Gastrocnemius medialis (tissue), 4 donors: ENCODE measurements at regions of chr3 and their contacts with region 1.

Region 1: GRCh38 chr3:12135029-12135657 is 23.6 kb downstream of the TIMP4 start:
- DNase-seq: peak; percentile 49 to 62
- ATAC-seq: peak; percentile 68 to 72
- H3K4me3 ChIP-seq: no peak overlapping the region
- H3K27ac ChIP-seq: peak overlapping the region in 3 of 4 donors; percentile 5 to 92 (median 11)
- H3K4me1 ChIP-seq: peaks cover 12 to 19% of the 10 kb centered on the region in 2 donors
- H3K27me3 ChIP-seq: no peaks in the 10 kb centered on the region
- CTCF ChIP-seq: peak; percentile 84 to 92 (median 88)
- POLR2A ChIP-seq: no peak

Region 2: DNA sequence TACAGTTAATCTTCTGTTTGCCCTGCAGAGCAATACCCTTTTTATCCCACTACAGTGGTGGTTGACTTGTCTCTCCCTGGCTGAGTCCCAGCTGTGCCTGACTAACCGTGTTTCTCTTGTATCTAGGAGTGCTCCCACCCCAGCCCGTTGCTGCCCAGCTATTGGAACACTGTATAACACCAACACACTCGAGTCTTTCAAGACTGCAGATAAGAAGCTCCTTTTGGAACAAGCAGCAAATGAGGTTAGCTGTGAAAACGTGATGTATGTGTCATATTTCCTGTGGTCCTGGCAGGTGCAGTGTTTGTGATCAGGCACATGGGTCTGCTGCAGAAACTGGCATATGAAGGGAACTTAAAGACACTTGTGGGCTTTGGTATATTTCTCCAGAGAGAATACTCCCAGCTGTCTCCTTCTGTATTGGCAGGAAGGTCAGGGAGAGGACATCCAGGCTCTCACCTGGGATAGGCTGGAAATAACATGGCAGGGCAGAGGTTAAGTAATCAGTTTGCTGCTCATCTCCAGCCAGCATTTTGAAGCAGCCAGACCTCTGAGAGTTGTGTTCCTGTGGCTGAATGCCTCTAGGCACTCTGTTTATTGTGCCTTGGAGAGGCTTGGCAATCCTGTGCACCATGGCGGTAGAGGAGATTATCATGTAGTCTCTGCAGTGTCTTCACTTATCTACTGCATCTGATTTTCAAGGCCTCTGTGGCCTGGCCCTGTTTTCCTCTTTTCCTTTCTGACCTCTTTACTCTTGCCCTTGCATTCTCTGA is 828.1 kb before region 1 on chr3:
- in situ Hi-C with region 1: no loop called
- intact Hi-C with region 1: no loop called
- DNase-seq: no peak
- ATAC-seq: no peak
- H3K4me3 ChIP-seq: no peak overlapping the region
- H3K27ac ChIP-seq: no peak overlapping the region
- H3K4me1 ChIP-seq: peaks cover 5 to 8% of the 10 kb centered on the region in 2 donors
- H3K27me3 ChIP-seq: no peaks in the 10 kb centered on the region
- CTCF ChIP-seq: no peak
- POLR2A ChIP-seq: no peak

Region 3: DNA sequence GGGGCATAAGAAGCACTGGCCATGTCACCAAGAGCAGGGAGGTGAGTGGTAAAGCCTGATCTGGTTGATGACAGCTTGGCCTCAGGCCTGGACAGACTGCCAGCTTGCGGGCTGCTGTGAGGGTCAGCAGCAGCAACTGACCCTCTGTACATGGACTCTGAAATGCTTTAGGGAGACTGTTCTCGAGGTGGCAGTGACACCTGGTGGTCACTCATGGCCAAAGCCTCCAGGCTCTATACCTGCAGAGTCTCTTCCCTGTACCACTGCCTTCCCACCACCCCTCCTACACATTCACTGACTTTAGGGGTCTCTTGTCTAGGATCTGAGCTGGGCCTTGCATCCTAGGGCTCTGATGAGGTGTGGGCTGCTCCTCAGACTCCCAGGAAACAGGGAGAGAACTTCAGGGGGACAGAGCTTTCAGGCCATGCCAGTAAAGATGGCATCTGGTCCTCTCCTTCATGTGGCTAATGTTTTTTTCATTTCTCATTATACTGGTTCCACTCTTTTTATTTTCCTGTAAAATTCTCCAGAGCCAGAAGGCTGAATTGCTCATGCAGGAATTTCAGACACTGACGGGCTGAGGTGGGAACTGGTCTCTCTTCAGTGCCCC is 40.8 kb after region 1 on chr3:
- in situ Hi-C with region 1: loop called (anchors 5 kb)
- intact Hi-C with region 1: loop called (anchors 1 kb)
- DNase-seq: peak; percentile 26 to 60
- ATAC-seq: peak; percentile 79 to 86
- H3K4me3 ChIP-seq: no peak overlapping the region
- H3K27ac ChIP-seq: peak overlapping the region in 2 of 4 donors; percentile 12 to 33
- H3K4me1 ChIP-seq: peaks cover 5 to 6% of the 10 kb centered on the region in 2 donors
- H3K27me3 ChIP-seq: no peaks in the 10 kb centered on the region
- CTCF ChIP-seq: peak; percentile 85 to 96 (median 93)
- POLR2A ChIP-seq: no peak

Region 4: DNA sequence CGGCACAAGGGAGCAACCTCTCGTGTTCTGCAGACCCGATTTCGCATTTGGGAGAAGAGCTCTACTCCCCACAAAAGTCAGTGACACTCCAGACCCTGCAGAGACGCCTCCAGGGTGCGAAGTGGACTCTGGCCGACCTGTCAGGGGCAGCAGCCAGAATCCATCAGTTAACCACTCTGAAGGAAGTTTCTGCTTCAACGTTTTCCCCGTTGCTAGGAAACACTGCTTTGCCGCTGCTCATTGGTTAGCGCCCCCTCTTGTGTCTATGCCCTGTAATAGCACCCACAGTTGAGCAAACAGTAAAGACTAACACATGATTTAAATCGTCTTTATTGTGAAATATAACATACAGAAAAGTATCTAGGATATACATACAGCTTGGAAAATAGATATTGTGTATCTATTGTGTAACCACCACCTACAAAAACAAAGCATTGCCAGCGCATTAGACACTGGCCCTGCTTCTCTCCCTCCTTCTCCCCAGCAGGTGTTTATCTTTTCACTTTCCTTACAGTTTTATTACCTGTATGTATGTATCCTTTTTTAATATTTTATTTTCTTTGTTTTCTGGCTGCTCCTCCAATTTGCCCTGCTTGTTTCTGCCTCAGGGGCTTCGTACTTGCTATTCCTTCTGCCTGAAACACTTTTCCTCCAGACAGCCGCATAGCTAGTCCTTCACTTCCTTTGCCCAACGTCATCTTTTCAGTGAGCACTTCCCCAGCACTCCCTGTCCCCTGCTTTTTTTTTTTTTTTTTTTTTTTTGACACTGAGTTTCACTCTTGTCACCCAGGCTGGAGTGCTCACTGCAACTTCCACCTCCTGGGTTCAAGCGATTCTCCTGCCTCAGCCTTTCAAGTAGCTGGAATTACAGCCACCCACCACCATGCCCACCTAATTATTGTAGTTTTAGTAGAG is 585.1 kb after region 1 on chr3:
- in situ Hi-C with region 1: loop called in 2 of 4 experiments (anchors 25 kb)
- intact Hi-C with region 1: loop called (anchors 1 kb)
- DNase-seq: peak; percentile 45 to 60
- ATAC-seq: peak; percentile 90 to 96
- H3K4me3 ChIP-seq: peak overlapping the region; percentile 21 to 52 (median 46)
- H3K27ac ChIP-seq: peak overlapping the region; percentile 0 to 35 (median 25)
- H3K4me1 ChIP-seq: peaks cover 3 to 4% of the 10 kb centered on the region in 2 donors
- H3K27me3 ChIP-seq: no peaks in the 10 kb centered on the region
- CTCF ChIP-seq: peak; percentile 83 to 93 (median 85)
- POLR2A ChIP-seq: no peak

Region 5: DNA sequence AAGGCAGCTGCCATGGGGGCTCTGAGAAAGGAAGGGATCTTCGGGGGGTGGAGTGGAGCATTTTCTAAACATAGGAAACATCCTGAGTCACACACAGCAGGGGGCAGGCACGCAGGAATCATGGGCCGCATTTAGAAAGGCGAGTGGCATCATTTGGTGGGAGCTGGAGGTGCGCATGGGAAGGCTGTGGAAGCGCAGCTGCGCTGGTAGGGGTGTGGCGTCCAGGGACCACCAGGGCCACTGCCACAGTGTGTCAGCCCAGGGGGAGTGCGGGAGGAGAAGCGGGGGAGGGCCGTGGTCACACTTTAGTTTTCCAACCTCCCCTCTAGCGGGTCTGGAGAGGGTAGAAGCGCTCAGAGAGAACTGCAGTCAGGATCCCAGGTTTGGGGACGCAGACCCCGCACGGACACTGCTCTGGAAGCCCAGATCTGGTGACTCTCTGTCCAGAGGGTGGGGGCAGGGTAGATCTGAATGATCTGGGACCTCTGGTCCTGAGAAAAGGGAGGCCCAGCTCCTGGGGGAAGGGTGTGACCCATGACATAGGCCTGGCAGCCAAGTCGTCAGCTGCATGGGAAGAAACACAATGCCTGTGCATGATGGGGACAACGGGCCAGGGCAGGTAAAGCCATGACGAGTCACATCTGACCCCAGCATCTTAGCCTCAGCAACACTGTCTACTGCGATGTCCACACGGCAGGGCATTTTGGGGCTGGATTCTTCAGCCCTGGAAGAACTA is 1026.0 kb after region 1 on chr3:
- in situ Hi-C with region 1: no loop called
- intact Hi-C with region 1: no loop called
- DNase-seq: no peak
- ATAC-seq: no peak
- H3K4me3 ChIP-seq: no peak overlapping the region
- H3K27ac ChIP-seq: no peak overlapping the region
- H3K4me1 ChIP-seq: no peaks in the 10 kb centered on the region
- H3K27me3 ChIP-seq: no peaks in the 10 kb centered on the region
- CTCF ChIP-seq: no peak
- POLR2A ChIP-seq: no peak